Activated CD8-positive, alpha-beta T cell treated with anti-CD3 and anti-CD28 coated beads for 36 hours (primary cell): ENCODE measurements at regions of chr2 and their contacts with region 1.

Region 1: GRCh38 chr2:137467246-137467862 is 496.9 kb upstream of the HNMT start:
- DNase-seq: peak; percentile 38
- ATAC-seq: no peak
- H3K4me3 Mint-ChIP-seq: no peak overlapping the region
- H3K27ac Mint-ChIP-seq: no peak overlapping the region
- H3K4me1 Mint-ChIP-seq: no peaks in the 10 kb centered on the region
- H3K27me3 Mint-ChIP-seq: no peaks in the 10 kb centered on the region
- CTCF ChIP-seq: peak; percentile 50

Region 2: DNA sequence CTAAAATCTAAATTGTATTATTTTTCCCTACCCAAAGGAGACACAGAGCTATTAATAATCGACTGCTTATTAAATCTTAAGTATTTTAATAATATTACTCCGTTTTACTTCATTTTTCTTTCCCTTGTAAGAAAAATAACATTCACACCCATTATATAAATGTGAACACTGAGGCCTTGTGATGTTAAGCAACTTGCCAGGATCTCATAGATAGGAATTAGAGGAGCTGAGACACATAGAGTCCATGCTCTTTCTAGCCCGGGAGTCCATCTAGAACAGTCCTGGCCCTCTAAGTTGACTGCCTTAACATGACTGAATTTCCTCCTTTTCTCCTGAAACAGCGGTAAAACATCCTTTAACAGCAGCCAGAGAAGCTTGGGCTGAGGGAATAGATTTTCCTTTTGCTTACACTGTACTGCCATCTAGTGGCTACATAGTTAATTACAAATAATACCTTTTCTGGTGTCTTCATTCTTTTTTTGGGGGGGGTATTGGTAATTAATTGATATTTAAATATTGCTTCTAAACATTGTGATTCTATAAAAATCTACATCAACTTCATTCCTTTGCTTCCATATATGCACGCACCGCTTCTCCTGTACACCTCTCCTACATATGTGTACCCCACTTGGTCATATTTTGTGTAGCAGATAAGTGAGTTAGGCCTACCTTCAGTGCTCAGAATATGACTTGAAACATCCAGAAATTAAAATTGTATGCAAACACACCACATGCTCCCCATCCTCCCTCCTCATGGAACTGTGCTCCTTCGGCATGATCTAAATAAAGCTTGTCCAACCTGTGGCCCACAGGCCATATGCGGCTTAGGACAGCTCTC is 371.1 kb after region 1 on chr2:
- CTCF ChIA-PET with region 1: no interaction called
- POLR2A ChIA-PET with region 1: no interaction called
- intact Hi-C with region 1: loop called (anchors 10 kb)
- DNase-seq: no peak
- ATAC-seq: no peak
- H3K4me3 Mint-ChIP-seq: no peak overlapping the region
- H3K27ac Mint-ChIP-seq: no peak overlapping the region
- H3K4me1 Mint-ChIP-seq: no peaks in the 10 kb centered on the region
- H3K27me3 Mint-ChIP-seq: peaks cover 7% of the 10 kb centered on the region
- CTCF ChIP-seq: peak; percentile 77